Activated CD4-positive, alpha-beta memory T cell treated with anti-CD3 and anti-CD28 coated beads, Interleukin-2, amount 10 ng/mL, durations not matched to agents 7 days and 5 days (primary cell): ENCODE measurements at regions of chr11 and their contacts with region 1.

Region 1: DNA sequence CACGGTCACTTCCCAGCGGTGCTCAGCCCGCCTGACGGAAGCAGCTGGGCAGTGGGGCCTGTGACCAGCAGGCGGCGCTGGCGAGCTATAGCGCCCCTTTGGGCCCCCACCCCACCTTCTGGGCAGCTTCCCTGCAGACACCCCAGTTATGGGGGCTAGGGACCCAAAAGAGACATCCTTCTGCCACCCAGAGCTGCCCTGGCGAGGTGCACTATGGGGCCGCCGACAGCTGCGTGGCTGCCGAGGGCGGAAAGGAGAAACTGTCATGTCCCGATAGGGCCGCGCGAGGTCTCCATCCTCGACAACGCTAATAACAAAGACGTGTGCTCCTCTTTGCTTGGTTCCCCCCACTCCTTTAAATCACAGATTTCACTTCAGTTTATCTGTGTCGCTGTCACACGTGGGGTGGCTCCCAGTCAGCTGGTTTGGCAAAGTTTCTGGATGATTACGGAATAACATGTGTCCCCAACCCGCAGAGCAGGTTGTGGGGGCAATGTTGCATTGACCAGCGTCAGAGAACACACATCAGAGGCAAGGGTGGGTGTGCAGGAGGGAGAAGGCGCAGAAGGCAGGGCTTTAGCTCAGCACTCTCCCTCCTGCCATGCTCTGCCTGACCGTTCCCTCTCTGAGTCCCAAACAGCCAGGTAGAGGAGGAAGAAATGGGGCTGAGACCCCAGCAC is 674 bp upstream of the MYO7A start:
- DNase-seq: peak; percentile 56
- H3K4me3 Mint-ChIP-seq: peak overlapping the region; percentile 39
- H3K27ac Mint-ChIP-seq: no peak overlapping the region
- H3K4me1 Mint-ChIP-seq: peaks cover 4% of the 10 kb centered on the region
- H3K27me3 Mint-ChIP-seq: peaks cover 3% of the 10 kb centered on the region

Region 2: DNA sequence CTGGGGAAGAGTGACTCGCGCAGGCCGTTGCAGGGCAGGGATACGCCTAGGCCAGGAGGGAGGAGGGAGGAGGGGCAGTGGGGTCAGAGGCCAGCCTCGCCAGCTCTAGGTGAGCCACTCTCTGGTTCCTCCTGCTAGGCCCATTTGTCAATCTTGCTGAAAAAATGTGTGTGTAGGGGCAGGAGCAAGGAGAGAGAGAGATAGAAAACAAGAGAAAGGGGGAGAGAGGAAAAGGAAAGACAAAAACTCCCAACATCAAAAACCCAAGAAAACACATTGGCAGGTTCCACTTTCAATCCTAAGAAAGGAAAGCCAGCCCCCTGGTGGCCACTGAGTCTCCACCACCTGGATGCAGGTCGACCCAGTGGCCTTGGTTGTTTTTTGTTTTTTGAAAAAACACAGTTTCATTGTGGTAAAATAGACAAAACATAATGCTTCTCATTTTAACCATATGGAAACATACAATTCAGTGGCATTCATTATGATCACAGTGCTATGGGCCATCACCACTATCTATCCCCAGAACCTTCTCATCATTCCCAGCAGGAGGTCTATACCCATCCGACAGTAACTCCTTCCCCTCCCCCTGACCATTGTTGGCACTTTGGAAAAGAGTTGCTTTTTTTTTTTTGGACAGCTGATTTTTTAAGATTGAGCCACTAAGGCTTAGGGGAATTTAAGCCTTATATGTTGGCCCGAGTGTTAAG is 13.8 kb before region 1 on chr11:
- CTCF ChIA-PET with region 1: interaction called, 11 read pairs
- POLR2A ChIA-PET with region 1: no interaction called
- DNase-seq: no peak
- H3K4me3 Mint-ChIP-seq: no peak overlapping the region
- H3K27ac Mint-ChIP-seq: no peak overlapping the region
- H3K4me1 Mint-ChIP-seq: no peaks in the 10 kb centered on the region
- H3K27me3 Mint-ChIP-seq: no peaks in the 10 kb centered on the region

Region 3: DNA sequence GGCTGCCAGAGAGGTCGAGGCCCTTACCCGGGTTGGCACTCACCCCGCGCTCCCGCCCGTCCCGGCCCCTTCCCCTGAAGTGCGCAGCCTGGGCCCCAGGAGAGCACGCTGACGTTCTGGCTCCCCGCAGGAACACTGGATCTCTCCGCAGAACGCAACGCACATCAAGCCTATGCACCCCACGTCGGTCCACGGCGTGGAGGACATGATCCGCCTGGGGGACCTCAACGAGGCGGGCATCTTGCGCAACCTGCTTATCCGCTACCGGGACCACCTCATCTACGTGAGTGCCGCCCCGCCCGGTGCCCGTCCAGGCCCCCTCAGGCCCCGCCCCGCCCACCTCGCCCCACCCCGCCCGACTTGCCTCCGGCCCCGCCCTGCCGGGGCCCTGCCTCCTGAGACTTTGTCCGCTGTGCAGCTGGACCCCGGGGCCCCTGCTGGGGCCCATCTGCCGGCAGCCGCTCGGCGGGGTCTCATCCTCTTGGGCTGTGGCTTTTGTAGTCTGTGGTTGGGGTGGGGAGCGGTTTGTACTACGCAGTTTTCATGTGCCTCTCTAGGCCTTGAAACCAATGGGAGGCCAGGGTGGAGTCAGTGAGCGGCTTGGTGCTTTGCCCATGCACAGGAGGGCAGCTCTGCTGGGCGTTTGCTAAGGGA is 20.4 kb after region 1 on chr11:
- CTCF ChIA-PET with region 1: interaction called, 17 read pairs
- POLR2A ChIA-PET with region 1: no interaction called
- DNase-seq: peak; percentile 55
- H3K4me3 Mint-ChIP-seq: peak overlapping the region; percentile 6
- H3K27ac Mint-ChIP-seq: no peak overlapping the region
- H3K4me1 Mint-ChIP-seq: peaks cover 38% of the 10 kb centered on the region
- H3K27me3 Mint-ChIP-seq: peaks cover 4% of the 10 kb centered on the region

Region 4: DNA sequence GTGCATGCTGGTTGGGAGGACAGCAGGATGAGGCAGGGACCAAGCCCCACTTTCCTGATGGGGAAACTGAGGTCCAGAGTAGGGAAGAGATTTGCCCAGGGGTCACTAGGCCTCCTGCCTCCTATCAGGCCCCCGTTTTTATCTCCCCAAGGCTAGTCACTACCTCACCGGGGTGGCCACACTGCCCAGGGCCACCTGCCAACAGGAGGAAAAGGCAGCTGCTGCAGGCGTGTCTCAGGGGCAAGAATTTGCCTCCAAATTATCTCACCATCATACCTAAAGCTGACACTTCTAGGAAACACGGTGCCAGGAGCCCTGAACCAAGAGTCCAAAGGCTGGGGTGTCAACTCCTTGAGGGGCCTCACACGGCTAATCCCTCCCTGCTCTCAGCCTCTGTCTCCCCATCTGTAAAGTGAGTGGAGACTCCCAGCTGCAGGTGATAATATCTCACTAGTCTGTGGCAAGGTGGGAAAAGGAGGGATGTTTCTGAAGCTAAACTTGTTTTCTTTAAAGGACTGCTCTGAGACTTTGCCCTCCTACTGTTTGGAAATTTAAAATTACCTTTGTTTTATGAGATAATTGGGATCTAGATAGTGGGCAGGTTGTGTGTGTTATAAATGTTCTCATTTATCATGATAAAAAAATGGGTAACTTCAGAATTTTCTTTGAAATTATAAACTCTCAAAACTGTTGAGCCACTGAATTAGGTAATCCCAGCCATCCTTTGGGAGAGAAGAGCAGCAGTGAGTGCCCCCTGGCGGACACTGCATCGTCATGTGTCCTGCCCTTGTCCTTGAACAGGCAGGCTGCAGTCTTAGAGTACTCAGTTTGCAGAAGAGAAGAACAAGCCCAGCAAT is 60.6 kb after region 1 on chr11:
- CTCF ChIA-PET with region 1: interaction called, 91 read pairs
- POLR2A ChIA-PET with region 1: interaction called, 3 read pairs
- DNase-seq: peak; percentile 75
- H3K4me3 Mint-ChIP-seq: no peak overlapping the region
- H3K27ac Mint-ChIP-seq: no peak overlapping the region
- H3K4me1 Mint-ChIP-seq: peaks cover 7% of the 10 kb centered on the region
- H3K27me3 Mint-ChIP-seq: no peaks in the 10 kb centered on the region

Region 5: GRCh38 chr11:77619576-77620198 is 492.3 kb after region 1 on chr11:
- CTCF ChIA-PET with region 1: interaction called, 14 read pairs
- POLR2A ChIA-PET with region 1: no interaction called
- DNase-seq: no peak
- H3K4me3 Mint-ChIP-seq: no peak overlapping the region
- H3K27ac Mint-ChIP-seq: no peak overlapping the region
- H3K4me1 Mint-ChIP-seq: no peaks in the 10 kb centered on the region
- H3K27me3 Mint-ChIP-seq: no peaks in the 10 kb centered on the region